ENCODE measurements at regions of chr3 and their contacts with region 1.

Region 1: DNA sequence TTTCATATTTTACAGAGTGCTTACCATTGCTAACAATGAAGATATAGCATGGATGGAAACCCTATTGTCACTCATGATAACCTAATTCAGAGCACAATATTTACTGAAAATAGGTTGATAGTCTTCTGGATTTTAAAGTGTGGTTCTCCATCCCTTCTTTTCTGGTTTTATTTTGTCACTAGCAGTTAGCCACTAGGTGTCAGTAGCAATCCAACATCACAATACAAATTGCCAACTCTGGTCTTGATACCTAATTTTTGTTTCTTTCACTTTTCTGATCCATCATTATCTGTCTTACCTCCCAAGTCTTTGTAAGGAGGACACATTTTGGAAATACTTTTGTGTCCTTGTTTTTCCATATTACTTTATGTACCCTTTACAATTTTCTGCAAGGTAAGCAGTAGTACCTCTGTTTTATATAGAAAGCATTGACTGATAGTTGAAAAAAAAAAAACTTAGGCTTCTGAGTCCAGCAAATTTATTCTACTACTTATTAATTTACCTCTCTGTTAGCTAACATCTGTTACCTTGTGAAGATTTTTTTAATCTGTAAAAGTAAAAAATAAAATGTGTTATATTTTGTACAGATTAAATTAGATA is 28.3 kb upstream of the CRYBG3 start:
- DNase-seq: peak; percentile 25 to 57 (median 49)
- H3K4me3 ChIP-seq: no peak overlapping the region
- H3K4me3 Mint-ChIP-seq: no peak overlapping the region
- H3K27ac ChIP-seq: no peak overlapping the region
- H3K27ac Mint-ChIP-seq: no peak overlapping the region
- H3K4me1 ChIP-seq: no peaks in the 10 kb centered on the region
- H3K4me1 Mint-ChIP-seq: no peaks in the 10 kb centered on the region
- H3K27me3 ChIP-seq: no peaks in the 10 kb centered on the region
- H3K27me3 Mint-ChIP-seq: no peaks in the 10 kb centered on the region
- CTCF ChIP-seq: peak; percentile 80

Region 2: GRCh38 chr3:97278506-97278905 is 515.0 kb before region 1 on chr3:
- intact Hi-C with region 1: no loop called
- DNase-seq: no peak
- H3K4me3 ChIP-seq: no peak overlapping the region
- H3K4me3 Mint-ChIP-seq: no peak overlapping the region
- H3K27ac ChIP-seq: no peak overlapping the region
- H3K27ac Mint-ChIP-seq: no peak overlapping the region
- H3K4me1 ChIP-seq: no peaks in the 10 kb centered on the region
- H3K4me1 Mint-ChIP-seq: no peaks in the 10 kb centered on the region
- H3K27me3 ChIP-seq: no peaks in the 10 kb centered on the region
- H3K27me3 Mint-ChIP-seq: no peaks in the 10 kb centered on the region
- CTCF ChIP-seq: no peak

Region 3: DNA sequence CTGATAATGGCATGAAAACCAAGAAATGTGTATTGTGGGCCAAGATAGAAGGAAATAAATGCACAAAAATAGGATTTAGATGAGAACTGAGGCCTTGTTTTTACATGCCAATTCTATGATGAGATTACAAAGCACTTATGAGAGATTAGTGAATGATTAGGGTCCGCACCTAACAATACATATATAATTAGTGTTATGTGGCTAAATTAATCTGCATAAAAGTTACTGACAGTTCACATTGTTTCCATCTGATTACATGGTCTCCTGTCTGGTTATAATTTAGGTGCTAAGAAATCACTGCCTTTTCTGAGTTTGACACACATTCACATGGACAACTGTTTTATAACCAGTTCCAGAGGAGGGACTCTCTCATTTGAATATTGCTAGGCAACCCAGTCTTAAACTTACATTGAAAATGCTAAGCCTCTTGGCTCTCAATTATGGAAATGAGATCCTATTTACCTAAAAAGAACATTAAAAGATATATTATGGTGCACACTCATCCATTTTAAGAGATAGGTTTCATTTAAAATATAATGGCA is 146.0 kb before region 1 on chr3:
- intact Hi-C with region 1: no loop called
- DNase-seq: no peak
- H3K4me3 ChIP-seq: no peak overlapping the region
- H3K4me3 Mint-ChIP-seq: no peak overlapping the region
- H3K27ac ChIP-seq: no peak overlapping the region
- H3K27ac Mint-ChIP-seq: no peak overlapping the region
- H3K4me1 ChIP-seq: no peaks in the 10 kb centered on the region
- H3K4me1 Mint-ChIP-seq: no peaks in the 10 kb centered on the region
- H3K27me3 ChIP-seq: no peaks in the 10 kb centered on the region
- H3K27me3 Mint-ChIP-seq: peaks cover 0 to 2% (median 0%) of the 10 kb centered on the region in 3 donors
- CTCF ChIP-seq: no peak

Region 4: GRCh38 chr3:98022978-98023820 is 229.7 kb after region 1 on chr3:
- intact Hi-C with region 1: loop called (anchors 2 kb)
- DNase-seq: peak; percentile 61 to 71 (median 70)
- H3K4me3 ChIP-seq: no peak overlapping the region
- H3K4me3 Mint-ChIP-seq: no peak overlapping the region
- H3K27ac ChIP-seq: no peak overlapping the region
- H3K27ac Mint-ChIP-seq: peak overlapping the region in 1 of 7 donors; percentile 13
- H3K4me1 ChIP-seq: no peaks in the 10 kb centered on the region
- H3K4me1 Mint-ChIP-seq: peaks cover 4% of the 10 kb centered on the region
- H3K27me3 ChIP-seq: no peaks in the 10 kb centered on the region
- H3K27me3 Mint-ChIP-seq: peaks cover 1 to 2% (median 2%) of the 10 kb centered on the region in 3 donors
- CTCF ChIP-seq: peak; percentile 96

Region 5: GRCh38 chr3:98188545-98188944 is 395.0 kb after region 1 on chr3:
- intact Hi-C with region 1: no loop called
- DNase-seq: peak; percentile 4 to 81 (median 67)
- H3K4me3 ChIP-seq: no peak overlapping the region
- H3K4me3 Mint-ChIP-seq: no peak overlapping the region
- H3K27ac ChIP-seq: no peak overlapping the region
- H3K27ac Mint-ChIP-seq: peak overlapping the region in 3 of 7 donors; percentile 55 to 75 (median 73)
- H3K4me1 ChIP-seq: peaks cover 0 to 10% of the 10 kb centered on the region in 2 donors
- H3K4me1 Mint-ChIP-seq: peaks cover 18% of the 10 kb centered on the region
- H3K27me3 ChIP-seq: no peaks in the 10 kb centered on the region
- H3K27me3 Mint-ChIP-seq: peaks cover 1 to 9% (median 5%) of the 10 kb centered on the region in 3 donors
- CTCF ChIP-seq: peak; percentile 62